ENCODE measurements at regions of chr16 and their contacts with region 1.

Region 1: DNA sequence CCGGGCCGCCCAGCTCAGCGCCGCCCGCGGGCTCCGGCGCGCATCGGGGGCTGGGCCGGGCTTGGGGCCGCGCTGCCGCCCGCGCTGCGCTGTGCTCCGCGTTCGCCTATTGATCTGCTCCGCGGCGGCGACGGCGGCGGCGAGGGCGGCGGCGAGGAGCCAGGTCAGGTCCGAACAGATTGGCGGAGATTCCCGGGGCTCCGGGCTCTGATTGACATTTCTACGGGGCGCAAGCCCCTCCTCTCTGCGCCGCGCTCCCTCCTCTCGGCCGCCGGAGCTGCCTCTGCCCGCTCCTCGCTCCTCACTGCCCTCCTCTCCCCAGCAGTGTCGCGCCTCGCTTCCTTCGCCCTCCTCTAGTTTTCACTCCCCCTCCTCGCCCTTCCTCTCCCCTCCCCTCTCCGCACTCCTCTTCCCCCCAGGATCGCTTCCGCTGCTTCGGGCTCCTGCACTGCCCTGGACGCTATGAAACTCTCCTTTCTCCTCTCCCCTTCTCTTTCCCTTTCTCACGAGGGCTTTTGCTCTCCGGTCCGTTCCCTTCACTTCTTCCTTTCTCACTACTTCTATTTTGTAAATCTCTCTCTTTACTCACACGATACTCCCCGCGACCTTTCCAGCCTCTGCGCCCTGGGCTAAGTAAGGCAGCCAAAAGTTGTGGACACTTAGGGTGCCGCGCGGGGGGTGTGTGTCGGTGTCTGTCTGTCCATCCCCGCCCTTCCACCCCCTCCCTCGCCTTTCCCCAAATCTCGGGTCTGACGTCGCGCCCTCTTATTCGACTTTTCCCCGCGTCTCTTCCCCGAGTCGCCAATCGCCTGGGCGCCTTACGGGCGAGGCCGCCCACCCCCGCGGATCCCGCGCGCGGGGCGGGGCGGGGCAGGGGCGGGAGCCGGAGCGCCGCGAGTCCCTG is at the start of gene IRX3:
- DNase-seq: peak; percentile 77 to 84
- ATAC-seq: peak; percentile 75 to 84
- H3K4me3 ChIP-seq: peak within 1 kb of the TSS; percentile 61 to 94 (median 64)
- H3K27ac ChIP-seq: peak within 1 kb of the TSS; percentile 61 to 86 (median 82)
- H3K4me1 ChIP-seq: peaks cover 0 to 7% of the 10 kb centered on the region in 2 donors
- H3K27me3 ChIP-seq: peaks cover 34 to 72% (median 65%) of the 10 kb centered on the region in 3 donors
- CTCF ChIP-seq: no peak
- POLR2A ChIP-seq: peak; percentile 41 to 65
- total RNA-seq, gene IRX3: 3.5 to 40.6 (median 12.0) TPM

Region 2: GRCh38 chr16:53773150-53773846 is 513.0 kb before region 1 on chr16:
- in situ Hi-C with region 1: no loop called
- intact Hi-C with region 1: loop called (anchors 10 kb)
- DNase-seq: no peak
- ATAC-seq: peak; percentile 76 to 83
- H3K4me3 ChIP-seq: no peak overlapping the region
- H3K27ac ChIP-seq: no peak overlapping the region
- H3K4me1 ChIP-seq: peaks cover 35 to 41% of the 10 kb centered on the region in 2 donors
- H3K27me3 ChIP-seq: no peaks in the 10 kb centered on the region
- CTCF ChIP-seq: peak in 4 of 5 experiments; percentile 27 to 59 (median 40)
- POLR2A ChIP-seq: no peak

Region 3: DNA sequence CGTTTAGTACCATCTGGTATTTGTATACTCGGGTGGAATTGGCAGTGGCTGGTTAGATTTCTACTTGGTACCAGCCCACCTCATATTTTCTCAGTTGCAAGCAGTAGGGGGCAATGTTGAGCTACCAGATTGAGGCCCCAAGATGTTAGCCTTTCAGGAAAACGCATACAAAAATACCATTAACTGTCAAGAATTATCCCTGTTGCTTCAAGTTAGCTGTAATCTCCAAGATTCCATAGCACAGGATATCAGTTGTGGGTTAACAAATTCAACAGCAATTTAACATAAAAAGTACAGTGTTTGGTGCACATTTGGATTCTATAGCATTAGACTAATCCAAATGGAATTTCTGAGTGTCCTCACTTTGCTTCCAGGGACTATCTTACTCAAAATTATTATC is 394.2 kb before region 1 on chr16:
- in situ Hi-C with region 1: no loop called
- intact Hi-C with region 1: loop called (anchors 5 kb)
- DNase-seq: no peak
- ATAC-seq: peak; percentile 54 to 58
- H3K4me3 ChIP-seq: no peak overlapping the region
- H3K27ac ChIP-seq: no peak overlapping the region
- H3K4me1 ChIP-seq: peaks cover 9 to 12% of the 10 kb centered on the region in 2 donors
- H3K27me3 ChIP-seq: no peaks in the 10 kb centered on the region
- CTCF ChIP-seq: peak; percentile 29 to 71 (median 61)
- POLR2A ChIP-seq: no peak

Region 4: DNA sequence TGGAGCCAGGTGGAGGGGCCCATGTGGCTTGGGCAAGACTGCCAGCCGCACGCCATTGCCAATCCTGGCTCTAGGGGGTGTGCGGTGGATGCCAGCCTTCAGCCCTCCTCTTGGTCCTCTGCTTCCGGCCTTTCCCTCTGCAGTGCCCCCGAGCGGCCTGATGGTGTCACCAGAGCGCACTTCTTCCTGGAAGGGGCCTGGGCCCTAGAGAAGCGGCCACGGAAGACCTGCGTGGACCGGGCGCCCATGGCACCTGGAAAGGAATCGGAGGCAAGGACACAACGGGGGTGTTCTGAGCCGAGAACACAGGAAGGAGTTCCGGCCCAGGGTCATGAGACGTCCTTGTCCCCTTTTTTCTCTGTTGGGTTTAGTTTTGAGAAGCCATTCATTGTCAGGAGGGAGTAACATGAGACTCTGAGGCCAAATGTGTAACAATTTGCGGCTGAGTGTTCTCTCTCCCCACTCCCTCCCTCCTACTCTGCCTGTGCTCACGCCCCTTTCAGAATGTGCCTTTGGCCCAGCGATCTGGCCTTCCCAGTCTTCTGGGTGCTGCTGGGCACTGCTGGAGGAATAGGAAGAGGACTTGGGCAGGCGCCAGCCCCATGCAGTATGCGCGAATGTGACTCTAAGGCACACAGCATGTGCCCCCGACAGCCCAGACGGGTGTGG is 92.5 kb before region 1 on chr16:
- in situ Hi-C with region 1: loop called in 1 of 4 experiments (anchors 10 kb)
- intact Hi-C with region 1: no loop called
- DNase-seq: peak; percentile 63 to 65
- ATAC-seq: peak; percentile 84 to 96
- H3K4me3 ChIP-seq: peak overlapping the region; percentile 18 to 69 (median 43)
- H3K27ac ChIP-seq: peak overlapping the region; percentile 60 to 87 (median 72)
- H3K4me1 ChIP-seq: peaks cover 0 to 3% of the 10 kb centered on the region in 2 donors
- H3K27me3 ChIP-seq: peaks cover 0 to 5% (median 0%) of the 10 kb centered on the region in 3 donors
- CTCF ChIP-seq: peak; percentile 58 to 89 (median 71)
- POLR2A ChIP-seq: no peak

Region 5: GRCh38 chr16:55701442-55702319 is 1415.3 kb after region 1 on chr16:
- in situ Hi-C with region 1: no loop called
- intact Hi-C with region 1: no loop called
- DNase-seq: peak; percentile 7 to 35
- ATAC-seq: peak; percentile 58 to 70
- H3K4me3 ChIP-seq: no peak overlapping the region
- H3K27ac ChIP-seq: no peak overlapping the region
- H3K4me1 ChIP-seq: no peaks in the 10 kb centered on the region
- H3K27me3 ChIP-seq: no peaks in the 10 kb centered on the region
- CTCF ChIP-seq: peak; percentile 57 to 76 (median 68)
- POLR2A ChIP-seq: no peak